Mammary epithelial cell (primary cell): ENCODE measurements at regions of chr10 and their contacts with region 1.

Region 1: DNA sequence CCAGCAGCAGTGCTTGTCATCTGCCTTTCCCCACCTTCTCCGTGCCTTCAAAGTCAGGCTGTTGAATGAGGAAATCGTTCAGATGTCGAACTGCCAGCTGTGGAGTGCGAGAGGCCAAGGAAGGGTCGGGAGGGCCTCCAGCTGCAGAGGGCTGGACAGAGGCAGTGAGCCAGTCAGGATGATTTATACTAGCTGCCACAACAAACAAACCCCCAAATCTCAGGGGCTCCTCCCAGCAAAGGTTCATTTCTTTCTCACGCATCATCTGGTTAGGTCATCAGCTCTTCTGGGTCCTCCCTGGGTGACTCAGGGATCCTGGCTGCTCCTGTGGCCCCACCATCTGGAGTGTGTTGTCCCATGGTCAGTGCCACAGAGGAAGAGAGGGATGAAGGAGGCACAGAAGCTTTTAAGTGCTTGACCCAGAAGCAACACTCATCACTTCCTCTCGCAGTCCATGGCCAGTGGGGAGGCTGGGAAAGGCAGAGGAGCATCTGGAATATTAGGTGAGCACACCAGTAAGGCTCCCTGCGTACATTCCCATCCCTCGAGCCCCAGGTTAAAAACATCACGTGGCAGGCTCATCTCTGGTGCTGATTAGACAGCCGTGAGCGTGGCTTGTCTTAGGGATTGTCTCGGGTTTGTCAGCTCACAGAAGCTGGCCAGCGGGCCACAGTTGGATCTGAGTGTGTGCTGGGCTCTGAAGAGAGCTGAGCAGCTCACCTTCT is 140.7 kb downstream of the RGS10 start:
- DNase-seq: peak; percentile 77
- H3K4me3 ChIP-seq: no peak overlapping the region
- H3K27ac ChIP-seq: no peak overlapping the region
- H3K4me1 ChIP-seq: peaks cover 10% of the 10 kb centered on the region
- H3K27me3 ChIP-seq: no peaks in the 10 kb centered on the region
- CTCF ChIP-seq: no peak

Region 2: DNA sequence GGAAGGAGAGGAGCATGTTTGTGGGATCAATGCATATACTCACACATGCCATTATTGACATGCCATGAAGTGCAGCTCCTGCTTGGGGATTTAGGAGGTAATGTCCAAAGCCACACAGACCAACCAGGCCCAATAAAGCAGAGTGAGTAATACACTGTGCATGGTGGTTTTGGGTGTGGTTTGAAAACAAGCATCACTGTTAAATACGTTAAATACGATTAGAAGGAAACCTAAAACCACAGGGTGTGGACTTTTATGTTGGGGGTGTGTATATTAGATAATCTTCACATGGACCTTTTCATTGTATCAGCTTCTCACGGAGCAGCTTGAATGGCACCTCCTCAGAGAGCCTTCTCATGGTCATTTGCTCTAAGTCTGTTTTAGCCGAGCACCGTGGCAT is 310.9 kb before region 1 on chr10:
- CTCF ChIA-PET with region 1: no interaction called
- dilution Hi-C with region 1: no loop called
- in situ Hi-C with region 1: no loop called
- intact Hi-C with region 1: no loop called
- DNase-seq: peak; percentile 95
- H3K4me3 ChIP-seq: no peak overlapping the region
- H3K27ac ChIP-seq: peak overlapping the region; percentile 35
- H3K4me1 ChIP-seq: peaks cover 22% of the 10 kb centered on the region
- H3K27me3 ChIP-seq: no peaks in the 10 kb centered on the region
- CTCF ChIP-seq: no peak

Region 3: GRCh38 chr10:119305860-119306513 is 95.8 kb before region 1 on chr10:
- CTCF ChIA-PET with region 1: no interaction called
- dilution Hi-C with region 1: loop called (anchors 5 kb)
- in situ Hi-C with region 1: no loop called
- intact Hi-C with region 1: no loop called
- DNase-seq: peak; percentile 97
- H3K4me3 ChIP-seq: no peak overlapping the region
- H3K27ac ChIP-seq: peak overlapping the region; percentile 50
- H3K4me1 ChIP-seq: peaks cover 44% of the 10 kb centered on the region
- H3K27me3 ChIP-seq: no peaks in the 10 kb centered on the region
- CTCF ChIP-seq: no peak

Region 4: DNA sequence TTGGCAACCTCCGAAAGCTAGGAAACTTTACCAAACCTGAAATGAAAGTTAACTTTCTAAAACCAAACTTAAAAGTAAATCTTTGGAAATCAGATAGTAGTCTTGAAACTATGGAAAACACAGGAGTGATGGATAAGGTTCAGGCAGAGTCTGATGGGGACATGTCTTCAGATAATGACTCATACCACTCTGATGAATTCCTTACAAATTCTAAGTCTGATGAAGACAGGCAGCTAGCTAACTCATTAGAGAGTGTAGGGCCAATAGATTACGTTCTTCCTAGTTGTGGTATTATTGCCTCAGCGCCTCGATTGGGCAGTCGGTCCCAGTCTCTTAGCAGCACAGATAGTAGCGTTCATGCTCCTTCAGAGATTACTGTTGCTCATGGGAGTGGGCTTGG is 424.9 kb after region 1 on chr10:
- CTCF ChIA-PET with region 1: no interaction called
- dilution Hi-C with region 1: no loop called
- in situ Hi-C with region 1: no loop called
- intact Hi-C with region 1: no loop called
- DNase-seq: peak; percentile 14
- H3K4me3 ChIP-seq: no peak overlapping the region
- H3K27ac ChIP-seq: no peak overlapping the region
- H3K4me1 ChIP-seq: no peaks in the 10 kb centered on the region
- H3K27me3 ChIP-seq: no peaks in the 10 kb centered on the region
- CTCF ChIP-seq: no peak